CD4-positive, alpha-beta T cell (primary cell): ENCODE measurements at regions of chr1 and their contacts with region 1.

Region 1: DNA sequence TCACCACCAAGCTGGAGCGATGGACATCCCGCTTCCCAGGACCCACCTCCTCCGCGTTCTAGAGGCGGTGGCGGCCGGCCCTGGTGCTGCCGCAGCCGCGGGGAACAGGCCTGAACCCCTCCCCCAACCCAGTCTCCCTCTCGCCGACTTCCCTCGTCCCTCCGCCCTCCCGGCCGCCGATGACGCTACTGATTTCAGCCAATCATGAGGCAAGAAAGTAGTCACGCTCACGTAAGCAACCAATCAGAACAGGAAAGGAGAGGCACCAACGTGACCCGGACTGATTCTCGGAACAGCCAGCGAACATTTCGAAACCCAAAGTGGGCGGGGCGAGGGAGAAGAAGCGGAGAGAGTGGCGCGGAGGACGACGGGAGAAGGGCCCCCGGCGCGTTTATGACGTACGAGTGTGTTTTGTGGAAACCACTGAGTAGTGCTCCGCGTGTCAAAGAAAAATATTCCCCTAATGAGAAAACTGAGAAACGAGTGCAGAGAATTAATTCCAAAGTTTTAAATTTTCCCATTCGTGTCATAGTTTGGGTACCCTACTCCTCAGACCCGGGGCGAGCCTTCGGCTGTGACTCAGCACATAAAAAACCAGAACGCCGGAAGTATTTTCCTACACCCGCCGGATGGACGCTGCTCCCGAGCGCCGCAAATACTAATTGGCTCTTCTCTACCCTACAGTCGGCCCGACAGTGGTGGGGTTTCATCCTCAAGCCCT is at the start of gene NRDC:
- DNase-seq: peak; percentile 97 to 100 (median 99)
- ATAC-seq: peak; percentile 88
- H3K4me3 ChIP-seq: peak within 1 kb of the TSS; percentile 68
- H3K4me3 Mint-ChIP-seq: no peak within 1 kb of the TSS
- H3K27ac ChIP-seq: peak within 1 kb of the TSS; percentile 89 to 95
- H3K27ac Mint-ChIP-seq: no peak within 1 kb of the TSS
- H3K4me1 ChIP-seq: peaks cover 33% of the 10 kb centered on the region
- H3K4me1 Mint-ChIP-seq: peaks cover 27% of the 10 kb centered on the region
- H3K27me3 ChIP-seq: peaks cover 2 to 3% of the 10 kb centered on the region in 2 experiments
- H3K27me3 Mint-ChIP-seq: peaks cover 13% of the 10 kb centered on the region
- CTCF ChIP-seq: no peak
- total RNA-seq, gene NRDC: 59.0 to 62.4 TPM

Region 2: GRCh38 chr1:50959913-50960844 is 918.6 kb before region 1 on chr1 and contains the start of gene FAF1:
- CTCF ChIA-PET with region 1: no interaction called
- POLR2A ChIA-PET with region 1: no interaction called
- intact Hi-C with region 1: loop called in 1 of 2 experiments (anchors 5 kb)
- DNase-seq: peak; percentile 95 to 99 (median 97)
- ATAC-seq: peak; percentile 87
- H3K4me3 ChIP-seq: peak within 1 kb of the TSS; percentile 94
- H3K4me3 Mint-ChIP-seq: peak within 1 kb of the TSS; percentile 98
- H3K27ac ChIP-seq: peak within 1 kb of the TSS; percentile 40 to 77
- H3K27ac Mint-ChIP-seq: peak within 1 kb of the TSS; percentile 50
- H3K4me1 ChIP-seq: peaks cover 13% of the 10 kb centered on the region
- H3K4me1 Mint-ChIP-seq: peaks cover 28% of the 10 kb centered on the region
- H3K27me3 ChIP-seq: no peaks in the 10 kb centered on the region
- H3K27me3 Mint-ChIP-seq: no peaks in the 10 kb centered on the region
- CTCF ChIP-seq: no peak
- total RNA-seq, gene FAF1: 43.5 to 44.0 TPM

Region 3: GRCh38 chr1:51616901-51617708 is 261.7 kb before region 1 on chr1 and contains the start of gene OSBPL9:
- CTCF ChIA-PET with region 1: no interaction called
- POLR2A ChIA-PET with region 1: no interaction called
- intact Hi-C with region 1: loop called (anchors 5 kb)
- DNase-seq: peak; percentile 80 to 98 (median 85)
- ATAC-seq: peak; percentile 90
- H3K4me3 ChIP-seq: peak within 1 kb of the TSS; percentile 97
- H3K4me3 Mint-ChIP-seq: peak within 1 kb of the TSS; percentile 99
- H3K27ac ChIP-seq: peak within 1 kb of the TSS; percentile 61 to 73
- H3K27ac Mint-ChIP-seq: peak within 1 kb of the TSS; percentile 95
- H3K4me1 ChIP-seq: peaks cover 17% of the 10 kb centered on the region
- H3K4me1 Mint-ChIP-seq: peaks cover 47% of the 10 kb centered on the region
- H3K27me3 ChIP-seq: no peaks in the 10 kb centered on the region
- H3K27me3 Mint-ChIP-seq: no peaks in the 10 kb centered on the region
- CTCF ChIP-seq: no peak
- total RNA-seq, gene OSBPL9: 35.6 to 36.5 TPM

Region 4: DNA sequence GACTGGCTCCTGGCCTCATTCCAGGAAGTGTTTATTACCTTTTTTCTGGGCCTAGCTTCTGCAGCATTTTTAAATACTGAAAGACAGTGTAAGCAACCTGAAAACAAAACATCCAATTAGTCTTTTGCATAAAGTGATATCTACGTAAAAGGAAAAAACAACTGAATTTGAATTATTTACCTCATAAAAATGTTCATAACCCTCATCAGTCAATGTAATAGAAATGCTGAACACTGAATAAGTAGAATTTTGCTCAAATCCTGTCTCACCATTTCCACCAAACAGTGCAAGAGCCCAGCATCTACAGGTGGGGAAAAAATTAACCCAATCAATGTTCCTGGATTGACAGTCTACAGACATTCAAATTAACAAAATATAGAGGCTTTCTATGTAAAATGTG is 64.3 kb before region 1 on chr1:
- CTCF ChIA-PET with region 1: no interaction called
- POLR2A ChIA-PET with region 1: no interaction called
- intact Hi-C with region 1: no loop called
- DNase-seq: no peak
- ATAC-seq: no peak
- H3K4me3 ChIP-seq: no peak overlapping the region
- H3K4me3 Mint-ChIP-seq: no peak overlapping the region
- H3K27ac ChIP-seq: no peak overlapping the region
- H3K27ac Mint-ChIP-seq: no peak overlapping the region
- H3K4me1 ChIP-seq: no peaks in the 10 kb centered on the region
- H3K4me1 Mint-ChIP-seq: no peaks in the 10 kb centered on the region
- H3K27me3 ChIP-seq: no peaks in the 10 kb centered on the region
- H3K27me3 Mint-ChIP-seq: no peaks in the 10 kb centered on the region
- CTCF ChIP-seq: no peak

Region 5: DNA sequence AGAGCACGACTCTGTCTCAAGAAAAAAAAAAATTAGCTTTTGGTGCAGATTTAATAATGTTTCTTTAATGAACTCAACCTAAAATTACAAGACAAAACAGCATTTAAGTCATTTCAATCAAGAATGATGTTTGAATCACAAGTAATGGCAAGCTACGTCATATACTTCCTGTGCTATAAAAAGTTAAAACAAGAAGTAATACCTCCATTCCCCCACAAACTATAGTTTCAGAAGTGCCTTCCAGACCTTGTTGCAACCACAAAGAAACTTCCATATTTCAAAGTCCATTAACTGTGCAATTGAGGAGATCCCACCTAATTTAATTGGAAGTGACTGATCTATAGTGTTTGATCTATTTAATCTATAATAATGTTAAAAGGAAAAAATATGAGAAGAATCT is 15.4 kb before region 1 on chr1:
- CTCF ChIA-PET with region 1: interaction called, 3 read pairs
- POLR2A ChIA-PET with region 1: interaction called, 8 read pairs
- intact Hi-C with region 1: loop called in 1 of 2 experiments (anchors 2 kb)
- DNase-seq: peak in 3 of 14 experiments; percentile 19 to 41 (median 29)
- ATAC-seq: peak; percentile 70
- H3K4me3 ChIP-seq: no peak overlapping the region
- H3K4me3 Mint-ChIP-seq: no peak overlapping the region
- H3K27ac ChIP-seq: no peak overlapping the region
- H3K27ac Mint-ChIP-seq: peak overlapping the region; percentile 66
- H3K4me1 ChIP-seq: peaks cover under 1% of the 10 kb centered on the region
- H3K4me1 Mint-ChIP-seq: peaks cover 58% of the 10 kb centered on the region
- H3K27me3 ChIP-seq: no peaks in the 10 kb centered on the region
- H3K27me3 Mint-ChIP-seq: no peaks in the 10 kb centered on the region
- CTCF ChIP-seq: no peak

Region 6: GRCh38 chr1:51936531-51936930 is 57.8 kb after region 1 on chr1:
- CTCF ChIA-PET with region 1: no interaction called
- POLR2A ChIA-PET with region 1: no interaction called
- intact Hi-C with region 1: no loop called
- DNase-seq: no peak
- ATAC-seq: no peak
- H3K4me3 ChIP-seq: no peak overlapping the region
- H3K4me3 Mint-ChIP-seq: no peak overlapping the region
- H3K27ac ChIP-seq: no peak overlapping the region
- H3K27ac Mint-ChIP-seq: no peak overlapping the region
- H3K4me1 ChIP-seq: no peaks in the 10 kb centered on the region
- H3K4me1 Mint-ChIP-seq: no peaks in the 10 kb centered on the region
- H3K27me3 ChIP-seq: no peaks in the 10 kb centered on the region
- H3K27me3 Mint-ChIP-seq: no peaks in the 10 kb centered on the region
- CTCF ChIP-seq: no peak

Region 7: GRCh38 chr1:52365746-52366516 is 487.2 kb after region 1 on chr1 and contains the start of gene CC2D1B:
- CTCF ChIA-PET with region 1: no interaction called
- POLR2A ChIA-PET with region 1: no interaction called
- intact Hi-C with region 1: loop called in 1 of 2 experiments (anchors 5 kb)
- DNase-seq: peak; percentile 97 to 100 (median 99)
- ATAC-seq: peak; percentile 79
- H3K4me3 ChIP-seq: peak within 1 kb of the TSS; percentile 76
- H3K4me3 Mint-ChIP-seq: peak within 1 kb of the TSS; percentile 94
- H3K27ac ChIP-seq: peak within 1 kb of the TSS; percentile 77 to 89
- H3K27ac Mint-ChIP-seq: peak within 1 kb of the TSS; percentile 96
- H3K4me1 ChIP-seq: peaks cover 50% of the 10 kb centered on the region
- H3K4me1 Mint-ChIP-seq: peaks cover 60% of the 10 kb centered on the region
- H3K27me3 ChIP-seq: no peaks in the 10 kb centered on the region
- H3K27me3 Mint-ChIP-seq: no peaks in the 10 kb centered on the region
- CTCF ChIP-seq: no peak
- total RNA-seq, gene CC2D1B: 46.5 to 47.5 TPM

Region 8: DNA sequence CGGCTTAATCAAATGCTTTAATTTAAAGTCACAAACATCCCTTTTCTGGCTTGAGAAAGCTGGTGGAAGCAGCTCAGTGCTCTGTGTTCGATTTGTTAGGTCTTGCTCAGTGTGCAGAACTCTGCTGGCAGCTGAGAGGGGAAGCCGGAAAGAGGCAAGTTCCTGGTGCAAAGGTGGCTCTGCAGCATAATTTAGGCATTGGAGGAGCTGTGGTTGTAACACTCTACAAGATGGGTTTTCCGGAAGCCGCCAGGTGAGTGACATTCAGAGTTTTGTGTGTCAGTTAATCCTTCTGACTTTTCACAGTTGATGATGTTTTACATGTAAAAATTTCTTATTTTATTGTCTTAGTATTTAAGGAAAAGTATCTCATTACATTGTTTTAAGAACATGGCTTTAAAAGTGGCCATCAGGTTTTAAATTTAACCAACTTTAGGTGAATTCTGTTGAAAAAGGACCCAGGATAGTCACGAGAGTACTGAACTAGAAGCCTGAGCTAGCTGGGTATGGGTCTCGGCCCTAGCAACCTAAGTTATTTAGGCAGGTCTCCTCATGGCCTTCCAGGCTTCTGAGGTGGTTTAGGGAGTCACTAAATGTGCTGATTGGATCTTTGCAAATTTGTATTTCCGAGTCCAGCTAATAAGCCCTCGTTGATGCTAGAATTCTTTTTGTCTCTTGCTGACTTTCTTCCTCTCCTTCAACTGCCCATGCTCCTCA is 1136.2 kb after region 1 on chr1:
- CTCF ChIA-PET with region 1: no interaction called
- POLR2A ChIA-PET with region 1: no interaction called
- intact Hi-C with region 1: loop called in 1 of 2 experiments (anchors 2 kb)
- DNase-seq: peak; percentile 62 to 95 (median 69)
- ATAC-seq: peak; percentile 100
- H3K4me3 ChIP-seq: peak overlapping the region; percentile 58
- H3K4me3 Mint-ChIP-seq: peak overlapping the region; percentile 88
- H3K27ac ChIP-seq: no peak overlapping the region
- H3K27ac Mint-ChIP-seq: peak overlapping the region; percentile 41
- H3K4me1 ChIP-seq: peaks cover 9% of the 10 kb centered on the region
- H3K4me1 Mint-ChIP-seq: peaks cover 38% of the 10 kb centered on the region
- H3K27me3 ChIP-seq: no peaks in the 10 kb centered on the region
- H3K27me3 Mint-ChIP-seq: no peaks in the 10 kb centered on the region
- CTCF ChIP-seq: no peak

Region 9: DNA sequence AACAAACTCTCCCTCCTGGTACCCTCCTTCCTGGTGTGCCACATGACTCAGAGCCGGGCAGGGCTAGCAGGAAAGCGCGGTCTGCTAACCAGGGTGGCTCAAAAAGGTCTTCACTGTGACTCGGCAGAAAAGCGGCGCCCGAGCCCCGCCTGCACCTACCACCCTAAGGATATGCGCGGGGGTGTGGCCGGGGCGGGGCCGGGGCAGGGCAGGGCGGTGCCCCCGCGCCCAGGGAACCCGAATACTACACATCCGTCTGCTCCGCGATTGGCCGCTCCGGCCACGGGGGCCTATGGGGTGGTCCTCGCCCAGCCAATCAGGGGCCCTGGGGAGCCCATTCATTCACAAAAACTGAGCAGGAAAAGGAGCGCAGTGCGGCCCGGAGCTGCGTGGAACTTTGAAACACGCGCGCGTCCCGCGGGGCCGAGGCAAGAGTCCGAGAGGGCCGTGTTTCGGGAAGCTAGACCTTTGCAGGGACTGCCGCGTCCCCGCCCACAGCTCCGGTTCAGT is 1447.4 kb after region 1 on chr1:
- CTCF ChIA-PET with region 1: no interaction called
- POLR2A ChIA-PET with region 1: no interaction called
- intact Hi-C with region 1: no loop called
- DNase-seq: peak; percentile 69 to 94 (median 87)
- ATAC-seq: peak; percentile 78
- H3K4me3 ChIP-seq: peak overlapping the region; percentile 86
- H3K4me3 Mint-ChIP-seq: peak overlapping the region; percentile 83
- H3K27ac ChIP-seq: peak overlapping the region in 1 of 2 donors; percentile 65
- H3K27ac Mint-ChIP-seq: peak overlapping the region; percentile 79
- H3K4me1 ChIP-seq: peaks cover 26% of the 10 kb centered on the region
- H3K4me1 Mint-ChIP-seq: peaks cover 17% of the 10 kb centered on the region
- H3K27me3 ChIP-seq: no peaks in the 10 kb centered on the region
- H3K27me3 Mint-ChIP-seq: no peaks in the 10 kb centered on the region
- CTCF ChIP-seq: no peak